Activated naive CD4-positive, alpha-beta T cell treated with anti-CD3 and anti-CD28 coated beads for 36 hours (primary cell): ENCODE measurements at regions of chr9 and their contacts with region 1.

Region 1: DNA sequence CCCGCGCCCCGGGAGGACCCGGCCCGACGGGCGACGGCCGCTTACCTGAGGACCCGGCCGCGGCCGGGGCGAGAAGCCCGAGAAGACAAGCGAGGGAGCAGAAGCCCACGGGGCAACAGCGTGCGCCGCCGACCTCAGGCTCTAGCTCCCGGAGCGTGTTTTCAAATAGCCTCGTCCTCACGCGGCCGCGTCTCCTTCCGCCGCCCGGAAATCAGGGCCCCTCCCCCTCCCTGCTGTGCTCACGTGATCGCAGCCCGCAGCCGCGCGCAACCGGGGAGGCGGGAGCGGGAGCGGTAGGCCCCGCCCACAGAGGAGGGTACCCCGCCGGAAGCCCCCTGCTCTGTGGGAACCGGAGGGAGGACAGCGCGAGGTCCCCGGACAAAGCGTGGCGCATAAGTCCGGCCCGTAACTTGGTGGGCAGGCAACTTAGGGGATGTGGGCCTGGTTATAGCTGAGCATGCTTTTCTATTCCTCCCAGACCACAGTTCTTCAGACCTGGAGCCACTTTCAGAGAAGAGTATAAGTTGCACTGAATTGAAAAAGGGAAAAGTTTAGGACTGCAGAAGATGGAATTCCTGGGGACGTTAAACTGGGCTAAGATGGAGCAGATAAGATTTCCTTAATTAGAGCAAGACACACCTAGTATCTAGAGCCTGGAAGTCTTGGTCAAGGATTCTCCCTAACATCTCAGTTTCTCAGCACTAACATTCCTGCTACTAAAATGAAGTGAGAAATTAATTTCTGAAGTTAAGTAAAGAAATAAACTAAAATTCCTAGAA is at the start of gene TEX10:
- DNase-seq: peak; percentile 91
- H3K4me3 Mint-ChIP-seq: peak within 1 kb of the TSS; percentile 85
- H3K27ac Mint-ChIP-seq: peak within 1 kb of the TSS; percentile 74
- H3K4me1 Mint-ChIP-seq: peaks cover 33% of the 10 kb centered on the region
- H3K27me3 Mint-ChIP-seq: no peaks in the 10 kb centered on the region
- total RNA-seq, gene TEX10: 17.3 to 17.9 TPM

Region 2: GRCh38 chr9:99221621-99222415 is 1131.1 kb before region 1 on chr9 and contains the starts of genes ALG2 and SEC61B:
- CTCF ChIA-PET with region 1: no interaction called
- intact Hi-C with region 1: loop called (anchors 2 kb)
- DNase-seq: peak; percentile 94
- H3K4me3 Mint-ChIP-seq: peak within 1 kb of the TSS; percentile 97
- H3K27ac Mint-ChIP-seq: peak within 1 kb of the TSS; percentile 98
- H3K4me1 Mint-ChIP-seq: peaks cover 56% of the 10 kb centered on the region
- H3K27me3 Mint-ChIP-seq: no peaks in the 10 kb centered on the region
- total RNA-seq, gene ALG2: 11.3 to 11.8 TPM
- total RNA-seq, gene SEC61B: 105 TPM

Region 3: GRCh38 chr9:99906403-99907207 is 446.3 kb before region 1 on chr9 and contains the start of gene STX17:
- CTCF ChIA-PET with region 1: no interaction called
- intact Hi-C with region 1: loop called (anchors 10 kb)
- DNase-seq: peak; percentile 75
- H3K4me3 Mint-ChIP-seq: peak within 1 kb of the TSS; percentile 95
- H3K27ac Mint-ChIP-seq: peak within 1 kb of the TSS; percentile 95
- H3K4me1 Mint-ChIP-seq: peaks cover 22% of the 10 kb centered on the region
- H3K27me3 Mint-ChIP-seq: no peaks in the 10 kb centered on the region
- total RNA-seq, gene STX17: 28.1 to 31.6 TPM

Region 4: DNA sequence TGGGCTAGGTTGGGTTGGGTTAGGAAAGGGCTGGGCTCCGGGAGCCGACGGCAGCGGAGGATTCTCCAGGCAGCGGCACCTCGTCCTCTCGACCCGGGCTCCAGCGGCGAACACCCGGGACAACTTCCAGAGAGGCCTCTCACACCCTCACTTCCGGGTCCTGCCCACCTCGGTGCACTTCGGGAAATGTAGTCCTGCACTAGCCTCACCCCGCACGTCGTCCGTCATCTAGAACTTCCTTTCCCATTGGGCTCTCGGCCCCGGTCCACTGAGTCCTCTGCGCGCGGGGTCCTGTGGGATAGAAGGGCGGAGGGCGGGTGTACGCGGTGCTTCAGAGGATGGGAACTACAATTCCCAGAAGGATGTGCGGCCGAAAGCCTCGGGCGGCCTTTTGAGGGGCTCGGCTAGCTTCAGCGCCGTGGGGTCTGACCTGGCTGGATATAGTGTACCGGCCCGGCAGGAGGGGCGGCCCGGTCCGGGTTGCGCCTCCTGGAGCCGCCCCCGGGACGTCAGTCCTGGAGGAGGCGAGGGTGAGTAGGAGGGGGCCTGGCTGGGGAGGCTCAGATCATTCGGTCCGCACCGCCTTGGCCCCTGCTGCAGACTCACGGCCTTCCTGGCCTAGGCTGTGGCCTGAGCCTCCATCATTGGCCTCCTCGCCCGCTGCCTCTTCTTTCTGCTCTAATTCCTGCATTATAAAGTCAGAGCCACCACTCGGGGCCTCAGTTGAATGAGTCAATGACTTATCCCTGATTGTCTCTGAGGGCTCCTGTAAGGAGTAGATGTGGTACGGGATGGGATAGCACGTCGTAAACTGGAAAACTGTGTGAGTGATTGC is 253.8 kb before region 1 on chr9 and contains the starts of genes ERP44 and INVS:
- CTCF ChIA-PET with region 1: no interaction called
- intact Hi-C with region 1: loop called (anchors 2 kb)
- DNase-seq: peak; percentile 99
- H3K4me3 Mint-ChIP-seq: peak within 1 kb of the TSS; percentile 97
- H3K27ac Mint-ChIP-seq: peak within 1 kb of the TSS; percentile 79
- H3K4me1 Mint-ChIP-seq: peaks cover 29% of the 10 kb centered on the region
- H3K27me3 Mint-ChIP-seq: no peaks in the 10 kb centered on the region
- total RNA-seq, gene ERP44: 9.1 to 9.5 TPM
- total RNA-seq, gene INVS: 5.7 to 7.3 TPM

Region 5: DNA sequence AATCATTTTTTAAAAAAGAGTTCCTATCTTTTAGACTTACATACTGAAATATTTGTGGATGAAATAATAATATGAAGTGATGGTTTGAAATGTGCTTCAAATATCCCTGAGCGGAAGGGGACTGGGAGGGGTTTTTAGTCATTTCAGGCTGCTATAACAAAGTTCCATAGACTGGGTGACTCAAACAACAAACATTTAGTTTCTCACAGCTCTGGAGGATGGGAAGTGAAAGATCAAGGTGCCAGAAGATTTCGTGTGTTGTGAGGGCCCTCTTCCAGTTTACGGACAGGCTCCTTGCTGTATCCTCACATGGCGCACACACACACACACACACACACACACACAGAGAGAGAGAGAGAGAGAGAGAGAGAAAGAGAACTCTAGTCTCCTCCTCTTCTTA is 26.9 kb after region 1 on chr9:
- CTCF ChIA-PET with region 1: no interaction called
- intact Hi-C with region 1: no loop called
- DNase-seq: no peak
- H3K4me3 Mint-ChIP-seq: no peak overlapping the region
- H3K27ac Mint-ChIP-seq: no peak overlapping the region
- H3K4me1 Mint-ChIP-seq: no peaks in the 10 kb centered on the region
- H3K27me3 Mint-ChIP-seq: no peaks in the 10 kb centered on the region

Region 6: GRCh38 chr9:100411472-100412283 is 58.8 kb after region 1 on chr9:
- CTCF ChIA-PET with region 1: interaction called, 3 read pairs
- intact Hi-C with region 1: loop called (anchors 1 kb)
- DNase-seq: peak; percentile 93
- H3K4me3 Mint-ChIP-seq: peak overlapping the region; percentile 82
- H3K27ac Mint-ChIP-seq: peak overlapping the region; percentile 32
- H3K4me1 Mint-ChIP-seq: peaks cover 13% of the 10 kb centered on the region
- H3K27me3 Mint-ChIP-seq: peaks cover 17% of the 10 kb centered on the region

Region 7: GRCh38 chr9:100426530-100427428 is 73.9 kb after region 1 on chr9 and contains the start of gene MSANTD3:
- CTCF ChIA-PET with region 1: interaction called, 5 read pairs
- intact Hi-C with region 1: loop called (anchors 1 kb)
- DNase-seq: peak; percentile 52
- H3K4me3 Mint-ChIP-seq: peak within 1 kb of the TSS; percentile 91
- H3K27ac Mint-ChIP-seq: peak within 1 kb of the TSS; percentile 82
- H3K4me1 Mint-ChIP-seq: peaks cover 30% of the 10 kb centered on the region
- H3K27me3 Mint-ChIP-seq: no peaks in the 10 kb centered on the region
- total RNA-seq, gene MSANTD3: 10.4 to 11.5 TPM

Region 8: GRCh38 chr9:100472788-100473275 is 119.9 kb after region 1 on chr9 and contains the start of gene TMEFF1:
- CTCF ChIA-PET with region 1: interaction called, 3 read pairs
- intact Hi-C with region 1: loop called (anchors 2 kb)
- DNase-seq: peak; percentile 64
- H3K4me3 Mint-ChIP-seq: peak within 1 kb of the TSS; percentile 59
- H3K27ac Mint-ChIP-seq: no peak within 1 kb of the TSS
- H3K4me1 Mint-ChIP-seq: peaks cover 3% of the 10 kb centered on the region
- H3K27me3 Mint-ChIP-seq: peaks cover 20% of the 10 kb centered on the region
- total RNA-seq, gene TMEFF1: 0.26 to 0.27 TPM